ENCODE measurements at regions of chr17 and their contacts with region 1.

Region 1: DNA sequence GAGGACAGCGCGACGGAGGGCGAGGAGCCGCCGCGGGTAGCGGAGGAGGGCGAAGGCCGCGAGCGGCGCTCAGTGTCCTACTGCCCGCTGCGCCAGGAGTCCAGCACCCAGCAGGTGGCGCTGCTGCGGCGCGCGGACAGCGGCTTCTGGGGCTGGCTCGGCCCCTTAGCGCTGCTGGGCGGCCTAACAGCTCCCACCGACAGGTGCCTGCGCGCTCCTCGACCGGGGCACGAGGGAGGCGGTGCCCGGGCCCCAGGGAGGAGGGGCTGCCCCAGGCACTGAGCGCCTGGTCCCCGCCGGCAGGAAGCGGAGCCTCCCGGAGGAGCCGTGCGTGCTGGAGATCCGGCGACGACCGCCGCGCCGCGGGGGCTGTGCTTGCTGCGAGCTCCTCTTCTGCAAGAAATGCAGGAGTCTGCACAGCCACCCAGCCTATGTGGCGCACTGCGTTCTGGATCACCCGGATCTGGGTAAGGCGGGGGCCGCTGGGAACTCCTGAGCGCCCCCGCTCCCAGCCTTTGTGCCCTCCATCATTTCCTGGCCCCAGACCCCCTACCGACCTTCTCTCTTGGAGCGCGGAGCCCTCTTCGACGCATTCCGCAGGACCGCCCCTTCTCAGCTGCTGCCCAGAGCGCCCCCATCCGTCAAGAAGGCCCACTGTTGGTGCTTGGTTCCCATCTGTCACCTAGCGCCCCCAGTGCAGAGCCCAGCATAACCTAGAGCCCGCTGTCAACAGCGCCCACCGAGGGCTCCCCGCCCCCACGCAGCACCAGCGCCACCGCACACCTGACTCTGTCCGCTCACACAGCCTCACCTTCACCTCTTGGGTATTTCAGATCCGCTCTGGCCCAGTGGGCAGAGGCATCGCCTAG is 3.7 kb downstream of the C17orf50 start:
- DNase-seq: peak; percentile 74
- ATAC-seq: peak; percentile 98
- H3K4me3 ChIP-seq: peak overlapping the region; percentile 35
- H3K27ac ChIP-seq: no peak overlapping the region; the same call in 1 of the 2 replicates
- H3K4me1 ChIP-seq: peaks cover 3% of the 10 kb centered on the region
- H3K27me3 ChIP-seq: peaks cover 29% of the 10 kb centered on the region
- CTCF ChIP-seq: peak; percentile 98
- POLR2A ChIP-seq: no peak
- RAD21 ChIP-seq: peak; percentile 92

Region 2: DNA sequence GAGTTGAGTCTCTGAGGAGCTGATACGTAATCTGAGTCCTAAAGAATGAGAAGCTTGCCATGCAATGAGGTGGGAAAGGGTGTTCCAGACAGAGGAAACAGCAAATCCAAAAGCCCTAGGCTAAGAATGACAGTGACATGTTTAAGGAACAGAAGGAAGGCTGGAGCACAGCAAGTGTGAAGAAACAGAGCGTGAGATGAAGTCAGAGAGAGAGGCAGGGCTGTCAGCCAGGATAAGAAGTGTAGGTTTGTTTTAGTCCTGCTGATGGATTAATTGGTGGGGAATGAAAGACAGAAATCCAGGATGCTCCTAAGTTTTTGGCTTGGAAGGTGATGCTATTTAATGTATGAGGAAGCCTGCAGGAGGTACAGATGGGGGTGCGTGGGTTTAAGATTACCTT is 16.6 kb after region 1 on chr17:
- CTCF ChIA-PET with region 1: interaction called, 14 read pairs
- POLR2A ChIA-PET with region 1: no interaction called
- dilution Hi-C with region 1: no loop called
- in situ Hi-C with region 1: no loop called
- intact Hi-C with region 1: no loop called
- DNase-seq: no peak
- ATAC-seq: no peak
- H3K4me3 ChIP-seq: no peak overlapping the region
- H3K27ac ChIP-seq: no peak overlapping the region
- H3K4me1 ChIP-seq: peaks cover 22% of the 10 kb centered on the region
- H3K27me3 ChIP-seq: peaks cover 24% of the 10 kb centered on the region
- CTCF ChIP-seq: no peak
- POLR2A ChIP-seq: no peak
- RAD21 ChIP-seq: no peak

Region 3: GRCh38 chr17:35788504-35789368 is 24.4 kb after region 1 on chr17:
- CTCF ChIA-PET with region 1: interaction called, 17 read pairs
- POLR2A ChIA-PET with region 1: interaction called, 16 read pairs
- dilution Hi-C with region 1: no loop called
- in situ Hi-C with region 1: no loop called
- intact Hi-C with region 1: no loop called
- DNase-seq: peak; percentile 92
- ATAC-seq: peak; percentile 81
- H3K4me3 ChIP-seq: no peak overlapping the region
- H3K27ac ChIP-seq: peak overlapping the region; percentile 11
- H3K4me1 ChIP-seq: peaks cover 23% of the 10 kb centered on the region
- H3K27me3 ChIP-seq: peaks cover 16% of the 10 kb centered on the region
- CTCF ChIP-seq: no peak
- POLR2A ChIP-seq: 0 out of 2 replicates have a peak, but pooled peaks have one; percentile 28
- RAD21 ChIP-seq: no peak

Region 4: DNA sequence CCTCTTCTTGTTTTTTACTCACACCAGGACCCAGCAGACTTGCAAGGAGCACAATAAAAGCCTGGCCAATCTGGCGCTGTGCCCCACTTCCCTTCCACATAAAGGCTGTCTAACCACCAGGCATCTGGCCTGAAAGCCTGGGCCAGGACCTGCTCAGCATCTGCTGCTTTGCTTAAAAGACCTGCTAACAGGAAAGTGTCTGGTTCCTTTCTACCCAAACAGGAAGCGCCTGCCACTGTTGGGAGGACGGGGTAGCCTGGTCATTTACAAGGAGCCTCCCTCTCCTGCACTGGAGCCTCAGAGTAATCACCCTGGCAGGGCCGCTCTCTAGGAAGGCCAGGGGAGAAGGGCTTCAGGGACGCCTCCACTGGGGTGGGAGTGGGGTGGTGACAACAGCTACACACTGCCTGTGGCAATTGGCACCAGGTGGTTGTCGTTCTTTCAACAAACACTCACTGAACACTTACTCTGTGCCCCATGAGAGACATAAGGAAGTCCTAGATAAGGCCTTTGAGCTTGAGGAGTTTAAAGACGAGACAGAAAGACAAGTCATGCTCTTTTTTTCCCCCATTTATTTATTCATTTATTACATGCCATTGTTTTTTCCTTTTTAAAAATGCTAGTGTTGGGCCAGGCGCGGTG is 37.3 kb after region 1 on chr17:
- CTCF ChIA-PET with region 1: interaction called, 34 read pairs
- POLR2A ChIA-PET with region 1: no interaction called
- dilution Hi-C with region 1: no loop called
- in situ Hi-C with region 1: loop called (anchors 5 kb)
- intact Hi-C with region 1: loop called (anchors 1 kb)
- DNase-seq: no peak
- ATAC-seq: no peak
- H3K4me3 ChIP-seq: no peak overlapping the region
- H3K27ac ChIP-seq: no peak overlapping the region
- H3K4me1 ChIP-seq: peaks cover 3% of the 10 kb centered on the region
- H3K27me3 ChIP-seq: peaks cover 26% of the 10 kb centered on the region
- CTCF ChIP-seq: no peak
- POLR2A ChIP-seq: no peak
- RAD21 ChIP-seq: no peak

Region 5: DNA sequence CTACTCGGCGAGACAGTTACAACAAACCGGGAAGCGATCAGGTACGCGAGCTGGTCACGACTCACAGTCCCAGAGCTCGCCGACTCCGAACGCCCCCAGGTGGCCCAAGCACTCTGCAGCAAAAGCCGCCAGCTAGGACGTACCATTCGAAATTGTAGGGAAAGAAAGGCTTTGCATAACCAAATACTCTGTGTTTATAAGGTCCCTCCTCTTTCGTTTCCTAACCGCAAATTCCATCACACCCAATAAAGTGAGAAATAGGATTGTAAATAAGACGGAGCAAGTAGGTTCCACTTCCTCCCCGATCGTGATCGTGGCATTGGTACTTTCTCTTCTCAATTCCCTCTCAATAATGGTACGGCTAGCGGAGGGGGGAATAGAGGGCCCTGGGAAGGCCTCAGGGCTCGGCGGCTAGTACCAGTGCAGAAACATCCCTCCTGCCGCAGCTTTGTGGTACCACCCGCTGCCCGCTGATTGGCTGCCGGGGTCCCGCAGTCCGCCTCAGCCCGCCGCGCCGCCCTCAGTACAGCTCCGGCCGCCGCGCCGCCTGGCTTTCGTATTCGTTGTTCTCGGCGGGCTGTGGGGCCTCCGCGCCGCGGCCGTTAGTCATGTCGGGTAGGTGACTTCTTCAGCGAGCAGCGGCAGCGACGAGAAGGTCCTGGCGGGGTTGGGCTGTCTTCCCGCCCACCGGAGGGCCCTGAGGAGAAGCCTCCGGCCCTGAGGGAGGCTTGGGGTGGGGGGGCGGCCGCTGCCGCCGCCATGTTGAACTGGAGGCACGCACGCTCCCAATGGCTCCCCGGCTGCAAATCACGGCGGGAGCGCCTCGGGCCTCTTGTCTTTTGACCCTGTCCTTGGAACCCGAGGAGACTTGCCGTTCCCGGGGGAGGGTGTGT is 44.9 kb after region 1 on chr17 and contains the start of gene TAF15:
- CTCF ChIA-PET with region 1: interaction called, 34 read pairs
- POLR2A ChIA-PET with region 1: no interaction called
- dilution Hi-C with region 1: no loop called
- in situ Hi-C with region 1: loop called (anchors 5 kb)
- intact Hi-C with region 1: loop called (anchors 1 kb)
- DNase-seq: peak; percentile 99
- ATAC-seq: peak; percentile 93
- H3K4me3 ChIP-seq: peak within 1 kb of the TSS; percentile 83
- H3K27ac ChIP-seq: peak within 1 kb of the TSS; percentile 91
- H3K4me1 ChIP-seq: peaks cover 10% of the 10 kb centered on the region
- H3K27me3 ChIP-seq: no peaks in the 10 kb centered on the region
- CTCF ChIP-seq: peak; percentile 76
- POLR2A ChIP-seq: peak; percentile 99
- RAD21 ChIP-seq: peak; percentile 61
- total RNA-seq, gene TAF15: 46.8 and 47.2 TPM in 2 replicates

Region 6: GRCh38 chr17:35819456-35819855 is 55.1 kb after region 1 on chr17:
- CTCF ChIA-PET with region 1: interaction called, 16 read pairs
- POLR2A ChIA-PET with region 1: no interaction called
- dilution Hi-C with region 1: no loop called
- in situ Hi-C with region 1: no loop called
- intact Hi-C with region 1: no loop called
- DNase-seq: no peak
- ATAC-seq: no peak
- H3K4me3 ChIP-seq: no peak overlapping the region
- H3K27ac ChIP-seq: no peak overlapping the region
- H3K4me1 ChIP-seq: peaks cover 4% of the 10 kb centered on the region; the same call in 1 of the 2 replicates
- H3K27me3 ChIP-seq: no peaks in the 10 kb centered on the region
- CTCF ChIP-seq: 0 out of 2 replicates have a peak, but pooled peaks have one; percentile 2
- POLR2A ChIP-seq: no peak
- RAD21 ChIP-seq: no peak

Region 7: DNA sequence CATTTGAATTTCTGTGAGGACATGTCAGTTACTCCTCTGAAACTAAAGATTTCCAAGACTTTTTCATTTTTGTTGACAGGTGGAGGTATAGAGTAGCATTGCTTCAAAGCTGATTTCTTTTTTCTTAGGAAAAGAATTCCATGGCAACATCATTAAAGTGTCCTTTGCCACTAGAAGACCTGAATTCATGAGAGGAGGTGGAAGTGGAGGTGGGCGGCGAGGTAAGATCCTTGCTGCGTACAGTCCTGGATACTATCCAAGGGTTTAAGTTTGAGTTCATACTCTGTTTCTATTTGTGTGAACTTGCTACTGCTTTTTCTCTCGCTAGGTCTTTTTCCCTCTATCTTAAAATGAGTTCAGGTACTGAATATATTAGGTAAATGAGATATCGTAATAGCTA is 77.9 kb after region 1 on chr17:
- CTCF ChIA-PET with region 1: no interaction called
- POLR2A ChIA-PET with region 1: no interaction called
- dilution Hi-C with region 1: no loop called
- in situ Hi-C with region 1: no loop called
- intact Hi-C with region 1: no loop called
- DNase-seq: no peak
- ATAC-seq: no peak
- H3K4me3 ChIP-seq: no peak overlapping the region
- H3K27ac ChIP-seq: no peak overlapping the region
- H3K4me1 ChIP-seq: no peaks in the 10 kb centered on the region
- H3K27me3 ChIP-seq: no peaks in the 10 kb centered on the region
- CTCF ChIP-seq: no peak
- POLR2A ChIP-seq: no peak
- RAD21 ChIP-seq: no peak